ENCODE measurements at regions of chr4 and their contacts with region 1.

Region 1: DNA sequence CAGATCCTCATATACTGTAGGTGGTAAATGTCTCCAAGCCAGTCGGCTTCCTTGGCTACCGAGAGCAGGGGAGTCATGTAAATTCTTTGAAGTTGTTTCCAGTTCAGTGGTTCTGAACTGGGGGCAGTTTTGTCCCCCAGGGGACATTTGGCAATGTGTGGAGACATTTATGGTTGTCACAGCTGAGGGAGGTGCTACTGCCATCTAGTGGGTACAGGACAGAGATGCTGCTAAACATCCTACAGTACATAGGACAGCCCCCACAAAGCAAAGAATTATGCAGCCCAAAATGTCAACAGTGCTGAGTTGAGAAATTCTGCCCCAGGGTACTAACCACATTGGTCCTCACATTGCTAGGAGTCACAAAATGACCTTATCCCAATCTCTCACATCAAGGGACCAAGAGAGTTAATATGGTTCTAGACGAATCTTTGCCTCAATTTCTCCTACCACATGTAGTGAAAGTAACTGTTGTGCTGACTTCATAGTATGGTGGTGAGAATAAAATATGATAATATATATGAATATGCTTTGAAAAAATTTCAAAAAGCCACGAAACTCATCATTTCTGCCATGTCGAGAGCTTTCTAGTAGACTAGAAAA is 104.4 kb upstream of the ARHGAP24 start:
- DNase-seq: peak in 4 of 5 donors; percentile 22 to 32 (median 24)
- ATAC-seq: peak; percentile 22 to 72 (median 67)
- H3K4me3 ChIP-seq: no peak overlapping the region
- H3K27ac ChIP-seq: no peak overlapping the region
- H3K4me1 ChIP-seq: peaks cover 0 to 18% (median 5%) of the 10 kb centered on the region in 12 donors
- H3K27me3 ChIP-seq: no peaks in the 10 kb centered on the region
- CTCF ChIP-seq: peak; percentile 59 to 81 (median 66)
- POLR2A ChIP-seq: no peak

Region 2: GRCh38 chr4:85084380-85085094 is 286.0 kb before region 1 on chr4:
- intact Hi-C with region 1: loop called in 9 of 10 experiments (anchors 1 to 10 kb)
- DNase-seq: peak in 2 of 5 donors; percentile 25 to 36
- ATAC-seq: peak in 2 of 4 donors; percentile 63 to 75
- H3K4me3 ChIP-seq: no peak overlapping the region
- H3K27ac ChIP-seq: no peak overlapping the region
- H3K4me1 ChIP-seq: peaks cover 0 to 5% (median 0%) of the 10 kb centered on the region in 12 donors
- H3K27me3 ChIP-seq: no peaks in the 10 kb centered on the region
- CTCF ChIP-seq: peak; percentile 58 to 87 (median 74)
- POLR2A ChIP-seq: no peak

Region 3: DNA sequence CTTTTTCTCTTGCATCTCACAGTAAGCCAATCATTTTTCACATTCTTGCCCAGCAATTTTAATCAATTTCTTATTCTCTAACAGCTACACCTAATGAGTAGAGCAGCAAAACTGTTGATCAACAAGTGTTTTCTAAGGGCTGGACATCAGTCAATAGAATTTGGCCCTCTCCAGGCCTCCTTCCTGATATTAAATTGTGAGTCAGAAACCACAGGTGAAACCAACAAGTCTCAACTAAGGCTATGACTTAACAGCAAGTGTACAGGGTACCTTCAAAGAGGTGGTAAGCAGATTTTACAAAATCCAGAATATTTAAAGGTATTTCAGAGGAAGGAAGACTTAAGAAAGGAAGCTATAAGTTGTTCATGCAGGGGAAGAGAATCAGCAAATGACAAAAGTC is 52.1 kb before region 1 on chr4:
- intact Hi-C with region 1: loop called in 1 of 10 experiments (anchors 10 kb)
- DNase-seq: no peak
- ATAC-seq: no peak
- H3K4me3 ChIP-seq: no peak overlapping the region
- H3K27ac ChIP-seq: no peak overlapping the region
- H3K4me1 ChIP-seq: peaks cover 0 to 14% (median 0%) of the 10 kb centered on the region in 12 donors
- H3K27me3 ChIP-seq: no peaks in the 10 kb centered on the region
- CTCF ChIP-seq: peak in 2 of 12 donors; percentile 19 to 39
- POLR2A ChIP-seq: no peak

Measured in heart left ventricle (tissue), 16 donors.